OCI-LY7 (cell line): ENCODE measurements at regions of chrX and their contacts with region 1.

Region 1: GRCh38 chrX:118760025-118760424 is 32.6 kb downstream of the IL13RA1 start:
- DNase-seq: no peak
- H3K4me3 ChIP-seq: no peak overlapping the region
- H3K27ac ChIP-seq: no peak overlapping the region
- H3K4me1 ChIP-seq: no peaks in the 10 kb centered on the region
- CTCF ChIP-seq: no peak

Region 2: DNA sequence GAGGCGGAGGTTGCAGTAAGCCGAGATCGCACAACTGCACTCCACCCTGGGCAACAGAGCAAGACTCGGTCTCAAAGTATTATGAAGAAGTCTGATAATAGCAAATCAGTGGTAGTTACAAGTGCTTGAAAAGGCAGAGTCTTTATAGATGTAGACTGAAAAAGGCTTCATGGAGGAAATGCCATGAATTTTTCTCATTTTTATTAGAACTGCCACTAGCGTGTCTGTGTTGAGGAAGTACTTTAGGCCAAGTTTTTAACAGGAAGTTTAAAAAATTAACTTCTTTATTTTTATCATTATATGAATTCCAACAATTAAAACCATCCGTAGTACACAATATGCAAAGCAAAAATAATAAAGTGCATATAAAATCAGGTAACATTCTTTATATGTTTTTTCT is 65.4 kb before region 1 on chrX:
- CTCF ChIA-PET with region 1: no interaction called
- POLR2A ChIA-PET with region 1: interaction called, 11 read pairs
- intact Hi-C with region 1: no loop called
- DNase-seq: no peak
- H3K4me3 ChIP-seq: no peak overlapping the region
- H3K27ac ChIP-seq: no peak overlapping the region
- H3K4me1 ChIP-seq: peaks cover 8% of the 10 kb centered on the region
- CTCF ChIP-seq: no peak

Region 3: DNA sequence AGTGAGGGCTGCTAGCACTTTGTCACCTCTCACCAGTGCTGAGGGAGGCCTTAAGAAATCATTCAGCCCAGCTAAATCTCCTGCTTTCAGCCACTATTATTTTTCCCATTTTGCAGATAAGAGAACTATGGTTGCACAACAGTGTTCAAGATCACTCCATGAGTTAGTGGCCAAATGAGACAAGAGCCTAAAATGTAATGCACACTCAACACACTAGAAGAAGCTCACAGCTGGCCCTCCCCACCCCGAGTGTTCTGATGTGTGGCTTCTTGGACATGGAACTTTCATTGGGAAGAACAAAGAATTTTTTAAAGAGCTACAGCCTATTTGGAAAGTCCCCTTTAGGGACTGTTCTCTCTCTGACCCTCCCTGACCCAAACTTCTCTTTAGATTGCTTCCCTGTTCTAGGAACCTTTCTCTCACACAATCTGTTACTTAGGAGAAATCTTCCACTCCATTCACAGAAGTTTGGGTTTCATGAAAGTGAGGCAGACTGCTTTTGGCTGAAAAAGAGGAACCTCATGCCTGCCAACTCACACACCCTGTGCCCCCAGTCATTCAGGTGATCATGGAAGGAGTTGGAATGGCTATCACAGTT is 268.8 kb after region 1 on chrX:
- CTCF ChIA-PET with region 1: no interaction called
- POLR2A ChIA-PET with region 1: no interaction called
- intact Hi-C with region 1: no loop called
- DNase-seq: no peak
- H3K4me3 ChIP-seq: no peak overlapping the region
- H3K27ac ChIP-seq: no peak overlapping the region
- H3K4me1 ChIP-seq: no peaks in the 10 kb centered on the region
- CTCF ChIP-seq: no peak